Heart left ventricle (tissue), 16 donors: ENCODE measurements at regions of chr2 and their contacts with region 1.

Region 1: DNA sequence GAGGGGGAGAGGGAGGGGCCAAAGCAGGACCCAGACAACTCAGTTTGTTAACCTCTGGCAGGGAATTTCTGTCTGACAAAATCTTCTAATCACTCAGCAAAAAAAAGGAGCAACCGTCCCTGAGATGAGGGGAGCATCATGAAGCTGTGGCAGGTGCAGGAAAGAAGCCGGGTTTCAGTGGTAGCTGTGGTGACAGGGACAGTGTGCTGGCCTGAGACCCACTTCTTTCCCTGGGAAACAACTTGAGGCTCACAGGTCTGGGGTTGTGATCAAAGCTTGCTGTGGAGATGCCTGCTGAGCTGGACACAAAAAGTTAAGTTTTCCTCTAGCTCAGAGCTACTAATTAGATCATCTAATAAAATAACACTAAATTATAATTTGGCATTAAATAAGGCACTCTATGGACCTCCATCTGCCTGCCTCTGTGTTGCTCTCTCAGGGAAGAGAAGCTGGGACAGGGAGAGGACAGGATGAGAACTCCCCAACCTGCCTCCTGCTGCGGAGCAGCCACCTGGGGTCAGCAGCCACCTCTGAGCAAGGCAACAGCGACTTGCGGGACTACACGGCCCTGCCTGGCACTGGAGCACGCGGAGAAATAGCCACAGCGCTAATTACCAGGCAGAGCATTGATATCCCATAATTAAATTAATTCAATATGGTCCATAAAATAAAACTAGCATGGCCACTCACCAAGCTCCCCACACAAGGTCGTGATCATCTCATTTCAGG is 104.6 kb upstream of the TEX51 start:
- DNase-seq: peak in 2 of 5 donors; percentile 2 to 7
- ATAC-seq: no peak
- H3K4me3 ChIP-seq: no peak overlapping the region
- H3K27ac ChIP-seq: no peak overlapping the region
- H3K4me1 ChIP-seq: no peaks in the 10 kb centered on the region
- H3K27me3 ChIP-seq: peaks cover 0 to 28% (median 7%) of the 10 kb centered on the region in 9 donors
- CTCF ChIP-seq: no peak
- POLR2A ChIP-seq: no peak

Region 2: DNA sequence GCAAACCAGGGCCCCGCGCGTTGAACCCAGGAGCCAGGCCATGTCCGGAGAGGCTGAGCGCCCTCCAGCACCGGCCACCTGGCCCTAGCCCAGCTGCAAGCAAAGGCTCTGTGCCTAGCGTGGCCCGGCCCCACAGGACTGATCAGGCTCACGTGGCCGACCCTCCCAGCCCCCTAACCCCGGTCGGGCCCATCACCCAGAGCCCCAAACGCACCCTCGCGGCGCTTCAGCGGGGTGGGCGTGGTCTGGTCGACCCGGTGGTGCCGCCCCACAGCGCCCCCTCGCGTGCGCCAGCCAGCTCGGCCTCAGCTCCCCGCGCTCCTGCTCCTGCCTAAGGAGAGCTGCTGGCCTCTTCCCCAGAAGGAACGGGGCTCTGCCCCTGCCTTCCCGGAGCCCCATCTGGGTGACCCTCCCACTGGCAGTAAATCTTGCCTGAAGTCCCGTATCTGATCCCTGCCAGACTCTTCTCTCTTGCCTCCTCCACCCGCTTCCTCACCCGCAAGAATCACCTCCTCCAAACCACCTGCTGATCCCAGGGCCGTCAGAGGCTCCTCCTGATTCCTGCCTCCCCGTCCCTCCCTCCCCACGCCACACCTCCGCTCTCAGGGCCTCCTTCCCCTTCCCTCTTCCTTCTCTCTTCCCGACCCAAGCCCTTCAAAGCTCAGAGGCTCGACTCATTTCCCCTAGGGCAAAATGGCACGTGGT is 92.3 kb after region 1 on chr2:
- intact Hi-C with region 1: loop called in 1 of 10 experiments (anchors 10 kb)
- DNase-seq: peak; percentile 43 to 80 (median 52)
- ATAC-seq: peak in 3 of 4 donors; percentile 68 to 92 (median 73)
- H3K4me3 ChIP-seq: peak overlapping the region in 11 of 12 donors; percentile 4 to 51 (median 37)
- H3K27ac ChIP-seq: no peak overlapping the region
- H3K4me1 ChIP-seq: peaks cover 0 to 11% (median 3%) of the 10 kb centered on the region in 12 donors
- H3K27me3 ChIP-seq: peaks cover 0 to 18% (median 5%) of the 10 kb centered on the region in 9 donors
- CTCF ChIP-seq: peak; percentile 44 to 73 (median 59)
- POLR2A ChIP-seq: no peak